ENCODE measurements at regions of chr1 and their contacts with region 1.

Region 1: DNA sequence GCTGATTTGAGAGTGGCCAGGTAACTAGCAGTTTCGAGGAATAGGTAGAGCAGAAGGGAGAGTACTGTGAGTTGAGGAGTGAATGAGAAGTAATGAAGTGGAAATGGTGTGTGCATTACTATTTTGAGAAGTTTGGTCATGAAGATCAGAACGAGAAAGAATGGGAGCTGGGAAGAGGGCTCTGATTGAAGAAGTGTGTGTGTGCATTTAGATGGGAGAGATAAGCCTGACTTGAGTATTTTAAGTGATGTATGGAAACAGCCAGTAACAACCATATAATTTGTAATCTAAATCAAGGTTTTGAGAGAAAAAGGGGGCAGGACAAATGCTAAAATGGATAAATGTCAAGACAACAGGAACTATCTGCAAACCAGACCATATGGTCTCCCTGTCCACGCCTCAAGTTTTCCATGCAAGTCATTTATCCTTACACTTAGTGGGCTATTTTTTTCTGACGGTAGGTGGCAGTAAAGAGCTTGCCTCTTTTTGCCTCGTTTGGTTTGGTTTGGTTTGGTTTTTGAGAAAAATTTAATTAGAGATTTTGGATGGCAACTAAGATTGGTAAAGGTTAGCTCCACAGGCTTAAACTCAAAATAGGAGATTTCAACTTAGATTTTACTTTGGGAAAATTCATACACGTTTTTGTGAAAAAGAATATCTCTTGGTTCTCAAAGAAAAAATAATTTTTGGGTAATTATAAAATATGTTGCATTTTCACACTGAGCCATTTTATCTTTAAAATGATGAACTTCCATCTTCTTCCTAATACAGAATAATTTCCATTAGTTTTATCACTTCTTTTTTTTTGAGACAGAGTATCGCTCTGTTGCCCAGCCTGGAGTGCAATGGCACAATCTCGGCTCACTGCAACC is 9.5 kb upstream of the B3GALNT2 start:
- DNase-seq: peak; percentile 69 to 73
- H3K4me3 ChIP-seq: no peak overlapping the region
- H3K4me1 ChIP-seq: no peaks in the 10 kb centered on the region
- H3K27me3 ChIP-seq: no peaks in the 10 kb centered on the region

Region 2: GRCh38 chr1:235225299-235225698 is 288.4 kb before region 1 on chr1:
- in situ Hi-C with region 1: no loop called
- DNase-seq: no peak
- H3K4me3 ChIP-seq: no peak overlapping the region
- H3K4me1 ChIP-seq: peaks cover 14% of the 10 kb centered on the region
- H3K27me3 ChIP-seq: no peaks in the 10 kb centered on the region

Region 3: GRCh38 chr1:235739124-235739523 is 225.4 kb after region 1 on chr1:
- in situ Hi-C with region 1: loop called (anchors 10 kb)
- DNase-seq: no peak
- H3K4me3 ChIP-seq: no peak overlapping the region
- H3K4me1 ChIP-seq: no peaks in the 10 kb centered on the region
- H3K27me3 ChIP-seq: no peaks in the 10 kb centered on the region

Region 4: GRCh38 chr1:235843461-235843961 is 329.8 kb after region 1 on chr1:
- in situ Hi-C with region 1: no loop called
- DNase-seq: peak in 1 of 2 experiments; percentile 62
- H3K4me3 ChIP-seq: no peak overlapping the region
- H3K4me1 ChIP-seq: no peaks in the 10 kb centered on the region; the same call in 1 of the 2 replicates
- H3K27me3 ChIP-seq: no peaks in the 10 kb centered on the region